ENCODE measurements at regions of chr17 and their contacts with region 1.

Region 1: GRCh38 chr17:74659898-74660297 is 36.4 kb upstream of the CD300E start:
- DNase-seq: no peak
- H3K4me3 Mint-ChIP-seq: no peak overlapping the region
- H3K27ac Mint-ChIP-seq: no peak overlapping the region
- H3K4me1 Mint-ChIP-seq: peaks cover 3% of the 10 kb centered on the region
- H3K27me3 Mint-ChIP-seq: peaks cover 28% of the 10 kb centered on the region

Region 2: GRCh38 chr17:74671031-74671771 is 11.3 kb after region 1 on chr17:
- CTCF ChIA-PET with region 1: interaction called, 47 read pairs
- POLR2A ChIA-PET with region 1: no interaction called
- intact Hi-C with region 1: no loop called
- DNase-seq: peak; percentile 86
- H3K4me3 Mint-ChIP-seq: no peak overlapping the region
- H3K27ac Mint-ChIP-seq: no peak overlapping the region
- H3K4me1 Mint-ChIP-seq: no peaks in the 10 kb centered on the region
- H3K27me3 Mint-ChIP-seq: peaks cover 43% of the 10 kb centered on the region

Region 3: DNA sequence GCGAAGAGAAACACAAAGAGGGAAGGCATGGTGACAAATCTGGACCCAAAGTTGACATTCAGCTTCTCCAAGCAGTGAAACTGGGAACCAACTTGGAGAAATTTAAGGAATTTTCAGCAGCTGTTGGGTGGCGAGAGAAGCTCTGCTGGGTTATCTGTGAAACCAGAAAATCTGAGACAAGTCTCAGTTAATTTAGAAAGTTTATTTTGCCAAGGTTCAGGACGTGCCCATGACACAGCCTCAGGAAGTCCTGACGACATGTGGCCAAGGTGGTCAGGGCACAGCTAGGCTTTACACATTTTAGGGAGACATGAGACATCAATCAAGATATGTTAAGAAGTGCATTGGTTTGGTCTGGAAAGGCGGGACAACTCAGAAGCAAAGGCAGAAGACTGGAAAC is 64.0 kb after region 1 on chr17:
- CTCF ChIA-PET with region 1: interaction called, 12 read pairs
- POLR2A ChIA-PET with region 1: no interaction called
- intact Hi-C with region 1: no loop called
- DNase-seq: no peak
- H3K4me3 Mint-ChIP-seq: no peak overlapping the region
- H3K27ac Mint-ChIP-seq: no peak overlapping the region
- H3K4me1 Mint-ChIP-seq: no peaks in the 10 kb centered on the region
- H3K27me3 Mint-ChIP-seq: no peaks in the 10 kb centered on the region

Region 4: DNA sequence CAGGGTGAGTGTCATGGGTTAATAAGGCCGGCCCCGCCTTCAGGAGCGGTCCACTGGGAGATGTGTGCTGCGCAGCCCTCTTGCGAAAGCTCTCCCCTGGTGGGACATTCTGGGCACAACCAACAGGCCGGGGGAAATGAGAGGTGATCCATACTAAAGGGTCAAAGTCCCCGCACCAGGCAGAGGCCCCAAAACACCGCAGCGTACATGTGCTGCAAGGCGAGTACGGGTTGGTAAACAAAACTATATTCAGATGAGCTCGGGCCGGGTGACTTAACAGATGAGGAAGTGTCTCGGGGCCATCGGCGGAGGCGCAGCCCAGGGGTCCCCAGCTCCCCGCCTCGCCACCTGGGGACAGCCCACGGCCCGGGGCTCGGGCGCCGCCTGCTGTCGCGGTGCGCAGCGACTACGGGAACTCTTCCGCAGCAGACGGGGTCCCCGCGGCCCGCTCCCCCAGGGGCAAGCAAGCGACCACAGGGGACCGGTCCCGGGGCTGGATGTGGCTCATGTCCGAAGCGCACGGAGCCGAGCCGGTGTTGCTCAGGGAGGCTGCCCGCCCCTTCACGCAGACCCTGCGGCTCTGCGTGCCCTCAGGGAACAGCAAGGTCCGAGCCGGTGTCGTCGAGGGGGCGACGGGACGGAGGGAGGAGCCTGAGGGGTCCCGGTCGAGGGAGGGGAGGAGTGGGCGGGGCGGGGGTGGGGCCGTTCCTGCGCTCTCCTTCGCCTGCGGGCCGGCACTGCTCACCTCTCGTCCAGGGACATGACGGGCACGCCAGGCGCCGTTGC is 76.8 kb after region 1 on chr17 and contains the start of gene RAB37:
- CTCF ChIA-PET with region 1: interaction called, 223 read pairs
- POLR2A ChIA-PET with region 1: interaction called, 12 read pairs
- intact Hi-C with region 1: loop called (anchors 1 kb)
- DNase-seq: peak; percentile 53
- H3K4me3 Mint-ChIP-seq: peak within 1 kb of the TSS; percentile 77
- H3K27ac Mint-ChIP-seq: peak within 1 kb of the TSS; percentile 86
- H3K4me1 Mint-ChIP-seq: peaks cover 43% of the 10 kb centered on the region
- H3K27me3 Mint-ChIP-seq: no peaks in the 10 kb centered on the region
- total RNA-seq, gene RAB37: 6.5 to 7.0 TPM

Region 5: DNA sequence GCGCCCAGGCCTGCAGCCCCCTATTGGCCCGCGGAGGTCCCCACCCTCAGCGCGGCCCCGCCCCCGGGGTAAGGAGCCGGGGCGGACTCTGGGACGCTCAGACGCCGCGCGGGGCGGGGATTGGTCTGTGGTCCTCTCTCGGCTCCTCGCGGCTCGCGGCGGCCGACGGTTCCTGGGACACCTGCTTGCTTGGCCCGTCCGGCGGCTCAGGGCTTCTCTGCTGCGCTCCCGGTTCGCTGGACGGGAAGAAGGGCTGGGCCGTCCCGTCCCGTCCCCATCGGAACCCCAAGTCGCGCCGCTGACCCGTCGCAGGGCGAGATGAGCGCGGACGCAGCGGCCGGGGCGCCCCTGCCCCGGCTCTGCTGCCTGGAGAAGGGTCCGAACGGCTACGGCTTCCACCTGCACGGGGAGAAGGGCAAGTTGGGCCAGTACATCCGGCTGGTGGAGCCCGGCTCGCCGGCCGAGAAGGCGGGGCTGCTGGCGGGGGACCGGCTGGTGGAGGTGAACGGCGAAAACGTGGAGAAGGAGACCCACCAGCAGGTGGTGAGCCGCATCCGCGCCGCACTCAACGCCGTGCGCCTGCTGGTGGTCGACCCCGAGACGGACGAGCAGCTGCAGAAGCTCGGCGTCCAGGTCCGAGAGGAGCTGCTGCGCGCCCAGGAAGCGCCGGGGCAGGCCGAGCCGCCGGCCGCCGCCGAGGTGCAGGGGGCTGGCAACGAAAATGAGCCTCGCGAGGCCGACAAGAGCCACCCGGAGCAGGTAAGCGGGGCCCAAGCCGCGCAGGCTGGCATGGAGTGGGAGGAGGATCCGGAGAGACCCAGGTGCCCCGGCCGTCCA is 88.8 kb after region 1 on chr17 and contains the start of gene NHERF1:
- CTCF ChIA-PET with region 1: interaction called, 34 read pairs
- POLR2A ChIA-PET with region 1: no interaction called
- intact Hi-C with region 1: no loop called
- DNase-seq: peak; percentile 96
- H3K4me3 Mint-ChIP-seq: peak within 1 kb of the TSS; percentile 84
- H3K27ac Mint-ChIP-seq: peak within 1 kb of the TSS; percentile 85
- H3K4me1 Mint-ChIP-seq: peaks cover 52% of the 10 kb centered on the region
- H3K27me3 Mint-ChIP-seq: no peaks in the 10 kb centered on the region
- total RNA-seq, gene NHERF1: 136 TPM

Region 6: DNA sequence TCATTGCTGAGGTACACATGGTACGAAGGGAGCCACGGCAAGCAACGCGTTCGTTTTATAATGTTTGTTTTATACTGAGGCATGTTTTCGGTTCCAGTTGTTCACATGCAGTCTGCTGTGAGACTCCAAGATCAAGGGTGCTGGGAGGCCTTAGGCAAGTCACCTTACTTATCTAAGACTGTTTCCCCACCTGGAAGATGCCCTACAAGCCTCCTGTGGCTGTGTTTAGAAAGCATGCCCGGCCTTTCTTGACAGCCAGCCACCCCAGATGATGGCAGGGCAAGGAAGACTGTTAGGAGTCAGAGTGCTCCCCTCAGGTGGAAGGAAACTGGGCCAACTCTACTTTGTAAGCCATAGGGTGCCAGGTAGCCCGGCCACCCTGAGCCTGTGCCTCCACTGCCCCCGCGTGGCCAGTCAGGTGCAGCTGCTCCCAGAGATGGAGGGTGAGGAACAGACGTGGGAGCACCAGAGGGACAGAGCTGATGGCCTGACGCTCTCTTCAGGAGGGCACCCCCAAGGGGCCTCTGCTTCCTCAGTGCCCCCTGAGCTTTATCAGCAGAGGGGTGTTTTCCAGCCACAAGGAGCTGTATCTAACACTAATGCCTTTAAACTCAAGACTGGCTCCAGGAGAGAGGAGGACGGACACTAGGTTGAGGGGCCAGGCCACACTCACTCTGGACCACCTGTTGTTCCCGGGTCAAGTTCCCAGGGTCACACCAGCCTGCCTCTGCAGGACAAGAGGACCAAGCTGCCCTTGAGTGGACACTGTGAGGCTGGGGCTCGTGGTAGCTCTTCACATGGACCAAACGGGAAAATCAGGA is 110.8 kb after region 1 on chr17:
- CTCF ChIA-PET with region 1: interaction called, 47 read pairs
- POLR2A ChIA-PET with region 1: interaction called, 3 read pairs
- intact Hi-C with region 1: loop called (anchors 1 kb)
- DNase-seq: peak; percentile 83
- H3K4me3 Mint-ChIP-seq: no peak overlapping the region
- H3K27ac Mint-ChIP-seq: peak overlapping the region; percentile 71
- H3K4me1 Mint-ChIP-seq: peaks cover 40% of the 10 kb centered on the region
- H3K27me3 Mint-ChIP-seq: no peaks in the 10 kb centered on the region

Region 7: GRCh38 chr17:74864866-74865395 is 205.0 kb after region 1 on chr17:
- CTCF ChIA-PET with region 1: interaction called, 71 read pairs
- POLR2A ChIA-PET with region 1: no interaction called
- intact Hi-C with region 1: loop called (anchors 2 kb)
- DNase-seq: peak; percentile 81
- H3K4me3 Mint-ChIP-seq: no peak overlapping the region
- H3K27ac Mint-ChIP-seq: no peak overlapping the region
- H3K4me1 Mint-ChIP-seq: peaks cover 12% of the 10 kb centered on the region
- H3K27me3 Mint-ChIP-seq: peaks cover 16% of the 10 kb centered on the region

Region 8: GRCh38 chr17:75046582-75047289 is 386.8 kb after region 1 on chr17 and contains the starts of genes ATP5PD and KCTD2:
- CTCF ChIA-PET with region 1: no interaction called
- POLR2A ChIA-PET with region 1: no interaction called
- intact Hi-C with region 1: no loop called
- DNase-seq: peak; percentile 98
- H3K4me3 Mint-ChIP-seq: peak within 1 kb of the TSS; percentile 97
- H3K27ac Mint-ChIP-seq: peak within 1 kb of the TSS; percentile 91
- H3K4me1 Mint-ChIP-seq: peaks cover 42% of the 10 kb centered on the region
- H3K27me3 Mint-ChIP-seq: no peaks in the 10 kb centered on the region
- total RNA-seq, gene ATP5PD: 249 to 261 TPM
- total RNA-seq, gene KCTD2: 20.6 to 23.3 TPM